Spleen (tissue), 13 donors: ENCODE measurements at regions of chr7 and their contacts with region 1.

Region 1: GRCh38 chr7:25565949-25566348 is 337.7 kb upstream of the NPVF start:
- DNase-seq: no peak
- H3K4me3 ChIP-seq: no peak overlapping the region
- H3K27ac ChIP-seq: no peak overlapping the region
- H3K4me1 ChIP-seq: peaks cover 0 to 9% (median 4%) of the 10 kb centered on the region in 6 donors
- H3K27me3 ChIP-seq: no peaks in the 10 kb centered on the region
- CTCF ChIP-seq: peak; percentile 96 to 100 (median 98)
- POLR2A ChIP-seq: no peak

Region 2: DNA sequence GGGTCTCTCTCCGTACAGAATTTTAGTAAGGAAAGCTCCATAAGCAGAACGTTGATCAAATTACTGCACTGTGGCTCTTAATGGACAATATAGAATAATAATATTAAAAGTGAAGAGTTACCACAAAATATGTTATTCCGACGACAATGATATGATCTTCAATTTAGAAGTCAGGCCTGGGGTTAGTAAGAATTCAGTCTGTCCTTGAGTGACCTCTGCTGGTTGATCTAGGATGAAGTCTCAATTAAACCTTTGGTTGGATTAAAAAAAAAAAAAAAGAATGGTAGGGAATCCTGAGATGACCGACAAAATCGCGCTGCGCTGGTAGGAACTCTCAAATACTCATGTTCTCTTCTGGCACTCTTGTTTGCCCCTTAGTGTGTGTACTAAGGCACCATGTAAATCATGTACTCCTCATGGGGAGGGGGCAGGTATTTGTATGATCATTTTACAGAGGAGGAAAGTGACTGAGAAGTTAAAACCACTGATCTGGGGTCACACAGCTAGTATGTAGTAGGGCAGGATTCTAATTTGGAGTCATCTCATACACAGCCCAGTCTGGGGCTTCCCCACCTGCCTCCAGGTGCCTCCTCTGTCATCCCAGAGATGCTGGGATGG is 176.4 kb before region 1 on chr7:
- intact Hi-C with region 1: loop called (anchors 2 kb)
- DNase-seq: no peak
- H3K4me3 ChIP-seq: no peak overlapping the region
- H3K27ac ChIP-seq: no peak overlapping the region
- H3K4me1 ChIP-seq: peaks cover 0 to 4% (median 0%) of the 10 kb centered on the region in 6 donors
- H3K27me3 ChIP-seq: peaks cover 0 to 19% (median 0%) of the 10 kb centered on the region in 7 donors
- CTCF ChIP-seq: peak in 8 of 11 experiments; percentile 18 to 52 (median 41)
- POLR2A ChIP-seq: no peak

Region 3: DNA sequence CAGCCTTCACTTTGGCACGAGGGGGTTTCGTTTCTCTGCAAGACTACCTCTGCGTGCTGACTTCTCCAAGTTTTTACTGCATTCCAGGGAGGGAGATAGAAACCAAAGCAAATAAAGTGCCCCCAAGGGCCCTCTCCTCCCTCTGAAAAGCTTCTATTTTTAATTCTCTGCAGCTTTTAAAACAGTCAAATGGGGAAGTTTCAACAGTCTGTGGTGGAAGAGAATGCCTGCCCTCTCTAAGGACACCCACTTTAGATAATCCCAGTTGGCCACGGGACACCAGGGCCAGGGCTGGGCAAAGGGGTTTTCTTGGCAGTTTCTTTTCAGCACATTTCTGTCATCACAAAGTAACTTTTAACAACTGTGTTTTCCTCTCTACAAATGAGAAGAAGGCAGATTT is 49.1 kb after region 1 on chr7:
- intact Hi-C with region 1: no loop called
- DNase-seq: no peak
- H3K4me3 ChIP-seq: no peak overlapping the region
- H3K27ac ChIP-seq: peak overlapping the region in 5 of 8 donors; percentile 8 to 54 (median 27)
- H3K4me1 ChIP-seq: peaks cover 14 to 65% (median 47%) of the 10 kb centered on the region in 6 donors
- H3K27me3 ChIP-seq: no peaks in the 10 kb centered on the region
- CTCF ChIP-seq: no peak
- POLR2A ChIP-seq: no peak